ENCODE measurements at regions of chr12 and their contacts with region 1.

Region 1: DNA sequence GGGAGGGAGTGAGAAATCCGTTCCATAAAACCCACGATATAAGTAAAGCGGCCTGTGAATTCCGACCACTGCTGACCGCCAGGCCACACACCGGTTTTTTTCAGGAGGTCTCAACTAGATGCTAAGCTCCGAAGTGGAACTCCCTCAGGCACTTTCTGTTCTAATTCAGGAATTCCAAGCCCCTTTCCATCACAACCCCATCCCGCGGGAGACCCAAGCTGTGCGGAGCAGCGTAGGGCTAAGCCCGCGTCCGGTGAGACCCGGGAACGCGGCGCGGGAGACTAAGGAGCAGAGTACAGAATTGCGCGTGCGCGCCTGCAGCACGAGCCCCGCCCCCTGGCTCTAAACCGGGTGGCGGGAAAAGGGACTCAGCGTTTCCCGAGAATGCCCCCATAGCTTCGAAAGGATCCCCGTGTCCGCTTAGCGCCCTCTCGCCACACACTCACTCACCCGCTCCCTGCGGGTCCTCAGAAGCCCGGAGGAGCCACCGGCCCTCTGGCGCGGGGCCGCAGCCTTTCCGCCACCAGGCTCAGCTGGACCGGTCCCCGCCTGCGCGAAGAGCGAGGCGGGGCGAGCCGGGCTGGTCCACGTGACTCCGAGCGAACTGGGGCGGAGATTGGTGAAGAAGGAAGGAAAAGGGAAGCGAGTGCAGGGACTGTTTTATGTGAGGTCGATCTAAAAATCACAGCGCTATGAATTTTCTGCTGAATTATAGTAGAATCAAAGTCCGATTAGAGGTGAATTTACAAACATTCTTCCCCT is at the start of gene TIMELESS:
- DNase-seq: peak; percentile 68 to 91 (median 76)
- ATAC-seq: peak; percentile 97 to 99 (median 98)
- H3K4me3 ChIP-seq: peak within 1 kb of the TSS; percentile 91 to 94
- H3K4me3 Mint-ChIP-seq: peak within 1 kb of the TSS; percentile 79 to 91 (median 90)
- H3K27ac ChIP-seq: peak within 1 kb of the TSS; percentile 65
- H3K27ac Mint-ChIP-seq: peak within 1 kb of the TSS; percentile 98
- H3K4me1 ChIP-seq: peaks cover 7 to 14% of the 10 kb centered on the region in 2 experiments
- H3K4me1 Mint-ChIP-seq: peaks cover 14 to 20% (median 19%) of the 10 kb centered on the region in 3 donors
- H3K27me3 ChIP-seq: peaks cover 0 to under 1% of the 10 kb centered on the region in 2 experiments
- H3K27me3 Mint-ChIP-seq: no peaks in the 10 kb centered on the region
- total RNA-seq, gene TIMELESS: 5.0 to 7.5 (median 6.4) TPM

Region 2: GRCh38 chr12:56468216-56469006 is 19.4 kb after region 1 on chr12 and contains the start of gene SPRYD4:
- CTCF ChIA-PET with region 1: interaction called, 4 to 18 read pairs
- POLR2A ChIA-PET with region 1: no interaction called
- DNase-seq: peak; percentile 86 to 97 (median 93)
- ATAC-seq: peak; percentile 94 to 98 (median 96)
- H3K4me3 ChIP-seq: peak within 1 kb of the TSS; percentile 68 to 84
- H3K4me3 Mint-ChIP-seq: peak within 1 kb of the TSS; percentile 94 to 97 (median 94)
- H3K27ac ChIP-seq: peak within 1 kb of the TSS; percentile 82
- H3K27ac Mint-ChIP-seq: peak within 1 kb of the TSS; percentile 89 to 98
- H3K4me1 ChIP-seq: peaks cover 5 to 23% of the 10 kb centered on the region in 2 experiments
- H3K4me1 Mint-ChIP-seq: peaks cover 29 to 33% (median 32%) of the 10 kb centered on the region in 3 donors
- H3K27me3 ChIP-seq: no peaks in the 10 kb centered on the region
- H3K27me3 Mint-ChIP-seq: no peaks in the 10 kb centered on the region
- total RNA-seq, gene SPRYD4: 4.7 to 7.3 (median 5.5) TPM

Region 3: DNA sequence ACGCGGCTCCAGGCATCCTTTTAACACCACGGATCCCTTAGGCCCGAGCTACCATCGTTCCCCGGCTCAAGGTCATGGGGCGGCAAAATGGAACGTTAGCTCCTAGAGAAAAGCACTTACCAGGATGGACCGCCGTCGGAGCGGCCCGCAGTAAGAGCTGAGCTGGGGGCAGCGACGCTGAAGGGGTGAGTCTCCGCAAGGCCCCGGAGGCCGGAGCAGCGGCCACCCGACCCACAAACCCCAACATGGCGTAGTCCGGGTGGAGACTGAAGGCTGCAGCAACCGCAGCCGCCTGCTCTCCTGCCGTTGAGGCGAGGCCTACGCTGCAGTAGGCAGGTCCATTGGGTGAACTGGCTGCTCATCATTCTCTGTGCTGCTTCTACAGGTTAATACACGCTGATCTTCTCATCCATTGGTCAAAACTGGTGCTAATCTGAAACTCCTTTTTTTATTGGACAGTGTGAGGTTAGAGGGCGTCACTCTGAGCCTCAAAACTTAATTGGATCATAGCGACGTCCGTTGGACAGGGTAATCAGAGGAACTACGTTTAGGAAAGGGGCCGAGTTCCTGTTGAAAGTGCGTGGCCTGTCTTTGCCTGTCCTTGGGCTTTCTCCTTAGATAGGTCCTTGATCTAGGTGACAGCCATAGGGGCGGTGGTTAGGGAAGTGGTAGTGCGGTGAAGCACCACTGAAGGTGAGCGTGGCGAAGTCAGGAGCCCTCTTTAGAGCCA is 196.8 kb after region 1 on chr12 and contains the start of gene ATP5F1B:
- CTCF ChIA-PET with region 1: no interaction called
- POLR2A ChIA-PET with region 1: no interaction called
- DNase-seq: peak; percentile 72 to 99 (median 93)
- ATAC-seq: peak; percentile 94 to 99 (median 98)
- H3K4me3 ChIP-seq: peak within 1 kb of the TSS; percentile 97 to 99
- H3K4me3 Mint-ChIP-seq: peak within 1 kb of the TSS; percentile 97
- H3K27ac ChIP-seq: peak within 1 kb of the TSS; percentile 89
- H3K27ac Mint-ChIP-seq: peak within 1 kb of the TSS; percentile 99
- H3K4me1 ChIP-seq: peaks cover 18 to 37% of the 10 kb centered on the region in 2 experiments
- H3K4me1 Mint-ChIP-seq: peaks cover 34 to 39% (median 38%) of the 10 kb centered on the region in 3 donors
- H3K27me3 ChIP-seq: no peaks in the 10 kb centered on the region
- H3K27me3 Mint-ChIP-seq: no peaks in the 10 kb centered on the region
- total RNA-seq, gene ATP5F1B: 252 to 290 (median 283) TPM

Measured in T-cell (primary cell).